PC-3 (cell line): ENCODE measurements at regions of chr9 and their contacts with region 1.

Region 1: GRCh38 chr9:10566848-10567247 is 46.0 kb downstream of the PTPRD start:
- DNase-seq: peak; percentile 53
- ATAC-seq: peak; percentile 98
- H3K4me3 ChIP-seq: no peak overlapping the region
- H3K27ac ChIP-seq: peak overlapping the region; percentile 70
- H3K4me1 ChIP-seq: peaks cover 8% of the 10 kb centered on the region; the same call in 1 of the 2 replicates
- H3K27me3 ChIP-seq: no peaks in the 10 kb centered on the region
- CTCF ChIP-seq: no peak

Region 2: DNA sequence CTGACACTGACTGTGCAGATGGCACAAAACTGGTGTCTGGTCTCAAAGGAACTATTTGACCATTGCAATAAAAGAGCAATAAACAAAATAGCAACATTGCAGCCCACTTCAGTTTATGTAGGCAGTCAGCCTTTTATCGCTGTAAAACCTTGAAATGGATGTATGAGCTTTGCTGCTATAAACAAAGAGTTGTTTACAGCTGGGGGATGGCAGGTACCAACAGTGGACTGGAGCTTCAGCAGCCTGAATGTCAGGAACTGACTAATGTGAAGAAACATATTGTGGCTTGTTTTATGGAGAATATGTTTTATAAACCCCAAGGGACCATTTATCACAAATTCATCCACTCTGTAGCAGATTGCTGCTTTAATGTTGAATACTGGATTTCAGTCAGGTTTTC is 32.0 kb before region 1 on chr9:
- CTCF ChIA-PET with region 1: no interaction called
- POLR2A ChIA-PET with region 1: no interaction called
- intact Hi-C with region 1: loop called (anchors 1 kb)
- DNase-seq: peak; percentile 19
- ATAC-seq: peak; percentile 87
- H3K4me3 ChIP-seq: peak overlapping the region; percentile 23
- H3K27ac ChIP-seq: peak overlapping the region; percentile 89
- H3K4me1 ChIP-seq: peaks cover 14% of the 10 kb centered on the region
- H3K27me3 ChIP-seq: no peaks in the 10 kb centered on the region
- CTCF ChIP-seq: no peak